ENCODE measurements at regions of chr12 and their contacts with region 1.

Region 1: GRCh38 chr12:131345521-131346436 is 365.1 kb upstream of the SFSWAP start:
- DNase-seq: peak in 1 of 2 donors; percentile 74
- H3K4me3 ChIP-seq: no peak overlapping the region
- CTCF ChIP-seq: no peak
- POLR2A ChIP-seq: no peak

Region 2: GRCh38 chr12:131311764-131312163 is 34.0 kb before region 1 on chr12:
- intact Hi-C with region 1: no loop called
- DNase-seq: no peak
- H3K4me3 ChIP-seq: no peak overlapping the region
- CTCF ChIP-seq: no peak
- POLR2A ChIP-seq: no peak

Region 3: DNA sequence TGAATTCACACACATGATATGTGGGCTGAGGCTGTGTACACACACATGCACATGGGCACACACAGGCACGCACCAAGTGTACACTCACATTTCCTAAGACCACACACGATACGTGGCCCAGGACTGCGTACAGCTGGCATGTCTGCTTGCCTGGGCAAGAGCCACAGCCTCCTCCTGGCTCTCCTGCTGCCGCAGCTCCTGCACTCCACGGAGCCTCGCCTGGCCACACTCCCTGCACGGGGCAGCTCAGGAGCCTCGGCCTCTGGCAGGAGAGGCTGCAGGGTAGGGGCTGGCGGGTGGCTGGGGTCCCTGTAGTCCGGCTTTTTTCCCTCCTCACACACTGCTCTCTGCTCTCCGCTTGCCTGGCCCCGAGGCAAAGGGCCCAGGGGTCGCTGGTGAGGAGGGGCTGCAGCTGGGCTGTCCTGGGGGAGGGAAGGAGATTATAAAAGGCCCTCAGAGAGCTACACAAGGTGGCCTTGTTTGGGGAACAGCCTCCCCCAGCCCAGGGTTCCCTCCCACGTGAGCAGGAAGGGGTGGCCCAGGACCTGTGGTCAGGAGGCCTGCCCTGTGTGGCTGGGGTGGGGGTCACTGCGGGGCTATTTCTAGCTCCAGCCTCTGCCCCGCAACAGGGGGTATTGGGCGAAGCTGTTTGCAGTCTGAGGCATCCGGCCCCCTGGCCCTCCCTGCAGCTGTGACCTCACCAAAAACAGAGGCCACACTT is 276.1 kb after region 1 on chr12:
- intact Hi-C with region 1: loop called (anchors 2 kb)
- DNase-seq: no peak
- H3K4me3 ChIP-seq: no peak overlapping the region
- CTCF ChIP-seq: no peak
- POLR2A ChIP-seq: no peak